ENCODE measurements at regions of chr15 and their contacts with region 1.

Region 1: GRCh38 chr15:58331903-58332675 is 99.7 kb upstream of the LIPC start:
- DNase-seq: peak; percentile 84
- H3K4me3 Mint-ChIP-seq: peak overlapping the region; percentile 43
- H3K27ac Mint-ChIP-seq: peak overlapping the region; percentile 95
- H3K4me1 Mint-ChIP-seq: peaks cover 44% of the 10 kb centered on the region
- H3K27me3 Mint-ChIP-seq: no peaks in the 10 kb centered on the region

Region 2: DNA sequence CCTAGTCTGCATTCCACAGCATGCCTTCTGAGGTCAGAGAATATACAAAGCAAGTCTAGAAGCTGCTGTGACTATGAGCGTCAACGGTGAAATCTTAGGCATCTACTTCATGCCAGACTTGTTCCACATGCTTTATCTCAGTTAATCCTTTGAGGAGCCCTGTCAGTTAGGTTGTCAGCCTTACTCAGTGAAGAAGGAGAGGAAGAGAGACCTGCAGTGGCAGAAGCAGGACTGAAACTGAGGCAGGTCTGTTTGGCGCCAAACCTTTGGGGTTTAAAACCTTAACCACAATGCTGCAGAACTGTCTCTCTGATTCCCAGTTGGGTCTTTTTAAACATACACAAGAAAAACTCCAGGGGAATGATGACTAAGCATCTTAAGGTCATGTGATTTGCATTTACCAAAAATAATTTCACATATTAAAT is 39.3 kb before region 1 on chr15:
- intact Hi-C with region 1: loop called (anchors 5 kb)
- DNase-seq: no peak
- H3K4me3 Mint-ChIP-seq: no peak overlapping the region
- H3K27ac Mint-ChIP-seq: peak overlapping the region; percentile 61
- H3K4me1 Mint-ChIP-seq: peaks cover 48% of the 10 kb centered on the region
- H3K27me3 Mint-ChIP-seq: peaks cover 2% of the 10 kb centered on the region

Region 3: GRCh38 chr15:58357521-58358476 is 25.7 kb after region 1 on chr15:
- intact Hi-C with region 1: loop called (anchors 1 kb)
- DNase-seq: peak; percentile 35
- H3K4me3 Mint-ChIP-seq: peak overlapping the region; percentile 17
- H3K27ac Mint-ChIP-seq: peak overlapping the region; percentile 85
- H3K4me1 Mint-ChIP-seq: peaks cover 40% of the 10 kb centered on the region
- H3K27me3 Mint-ChIP-seq: peaks cover 2% of the 10 kb centered on the region

Region 4: DNA sequence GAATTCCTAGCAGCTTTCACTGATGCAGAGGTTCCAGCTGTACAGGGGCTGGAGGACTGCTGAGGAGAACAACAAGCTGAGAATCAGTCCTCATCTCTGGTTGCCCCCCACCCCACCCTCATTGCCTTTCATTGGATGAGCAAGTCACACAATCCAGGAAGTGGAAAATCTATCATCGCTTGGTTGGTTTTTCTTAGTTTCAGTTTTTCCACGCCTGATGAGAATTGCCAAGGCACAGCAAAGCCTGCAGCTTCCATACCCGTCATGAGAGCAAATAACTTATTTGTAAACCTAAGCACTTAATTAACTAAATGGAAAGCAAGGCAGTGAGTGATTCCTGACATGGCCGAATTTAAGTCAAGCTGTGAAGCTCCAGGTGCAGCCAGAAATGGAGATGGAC is 78.3 kb after region 1 on chr15:
- intact Hi-C with region 1: loop called (anchors 5 kb)
- DNase-seq: peak; percentile 17
- H3K4me3 Mint-ChIP-seq: peak overlapping the region; percentile 85
- H3K27ac Mint-ChIP-seq: peak overlapping the region; percentile 90
- H3K4me1 Mint-ChIP-seq: peaks cover 28% of the 10 kb centered on the region
- H3K27me3 Mint-ChIP-seq: no peaks in the 10 kb centered on the region

Region 5: DNA sequence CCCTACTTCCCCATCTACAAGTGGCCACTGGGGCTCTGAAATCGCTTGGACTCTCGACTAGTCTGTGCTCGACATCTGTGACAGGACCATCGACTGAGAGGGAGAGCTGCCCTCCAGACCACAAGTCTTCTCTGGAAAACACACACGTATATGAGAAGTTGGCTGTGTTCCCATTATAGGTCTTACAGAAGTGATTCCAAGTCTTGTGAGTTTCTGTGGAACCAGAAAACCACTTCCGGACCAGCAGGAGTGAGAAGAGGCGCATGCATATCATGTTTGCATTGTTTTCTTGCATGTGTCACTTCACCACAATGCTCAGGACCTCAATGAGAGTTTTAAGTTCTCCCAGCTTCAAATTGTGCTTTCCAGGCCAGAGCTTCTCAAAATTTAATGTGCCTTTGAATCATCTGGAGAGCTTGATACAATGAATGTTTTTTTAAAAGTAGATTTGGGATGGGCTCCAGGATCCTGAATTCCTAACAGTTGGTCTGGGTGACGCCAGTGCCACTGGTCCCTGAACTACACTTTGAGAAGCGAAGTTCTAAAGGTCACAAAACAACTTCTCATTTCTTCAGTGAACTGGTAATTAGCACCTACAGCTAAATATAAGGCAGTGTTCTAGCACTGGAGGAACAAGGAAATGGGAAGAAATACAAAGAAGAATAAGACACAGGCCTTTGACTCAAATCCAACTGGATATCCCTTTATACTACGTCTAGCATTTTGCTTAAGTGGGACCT is 115.4 kb after region 1 on chr15:
- intact Hi-C with region 1: no loop called
- DNase-seq: no peak
- H3K4me3 Mint-ChIP-seq: no peak overlapping the region
- H3K27ac Mint-ChIP-seq: peak overlapping the region; percentile 59
- H3K4me1 Mint-ChIP-seq: peaks cover 32% of the 10 kb centered on the region
- H3K27me3 Mint-ChIP-seq: no peaks in the 10 kb centered on the region

Region 6: GRCh38 chr15:58469432-58470353 is 137.6 kb after region 1 on chr15:
- intact Hi-C with region 1: loop called (anchors 5 kb)
- DNase-seq: no peak
- H3K4me3 Mint-ChIP-seq: no peak overlapping the region
- H3K27ac Mint-ChIP-seq: no peak overlapping the region
- H3K4me1 Mint-ChIP-seq: peaks cover 59% of the 10 kb centered on the region
- H3K27me3 Mint-ChIP-seq: no peaks in the 10 kb centered on the region

Region 7: GRCh38 chr15:58933281-58934113 is 601.4 kb after region 1 on chr15 and contains the start of gene SLTM:
- intact Hi-C with region 1: loop called (anchors 1 kb)
- DNase-seq: peak; percentile 88
- H3K4me3 Mint-ChIP-seq: peak within 1 kb of the TSS; percentile 98
- H3K27ac Mint-ChIP-seq: peak within 1 kb of the TSS; percentile 100
- H3K4me1 Mint-ChIP-seq: peaks cover 34% of the 10 kb centered on the region
- H3K27me3 Mint-ChIP-seq: no peaks in the 10 kb centered on the region
- total RNA-seq, gene SLTM: 142 and 143 TPM in 2 replicates